ENCODE measurements at regions of chr2 and their contacts with region 1.

Region 1: DNA sequence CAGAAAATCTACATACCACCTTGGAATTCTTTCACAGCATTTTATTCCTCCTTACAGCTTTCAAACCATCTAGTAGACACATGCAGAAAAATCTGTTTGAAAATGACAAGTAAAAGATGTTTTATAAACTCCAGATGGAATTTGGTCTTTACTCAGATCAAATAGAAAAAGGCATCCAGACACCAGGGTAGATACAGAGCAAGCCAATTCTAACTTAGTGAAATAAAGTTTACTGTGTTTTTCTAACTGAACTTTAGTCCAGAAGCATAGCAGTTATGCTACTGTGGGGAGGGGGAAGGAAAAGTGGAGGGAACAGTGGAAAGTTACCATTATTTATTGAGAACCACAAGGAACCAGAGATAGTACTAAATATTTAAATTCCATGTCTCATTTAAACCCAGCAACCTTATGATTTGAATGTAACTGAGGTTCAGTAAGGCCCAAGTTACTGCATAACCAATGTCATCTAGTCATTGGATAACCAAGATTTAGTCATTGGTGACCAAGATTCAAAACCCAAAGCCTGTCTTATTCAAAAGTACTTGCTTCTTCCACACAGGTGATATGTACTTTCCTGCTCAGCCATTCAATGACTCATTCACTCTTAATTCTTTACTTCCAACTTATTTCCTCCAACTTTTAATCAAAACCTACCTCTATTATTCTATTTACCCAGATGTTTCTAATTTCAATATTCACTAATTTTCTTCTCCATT is 57.7 kb downstream of the RAD51AP2 start:
- DNase-seq: no peak
- H3K4me3 ChIP-seq: no peak overlapping the region
- H3K27ac ChIP-seq: no peak overlapping the region
- H3K4me1 ChIP-seq: no peaks in the 10 kb centered on the region
- H3K27me3 ChIP-seq: no peaks in the 10 kb centered on the region
- CTCF ChIP-seq: no peak
- EP300 ChIP-seq: no peak
- POLR2A ChIP-seq: no peak

Region 2: DNA sequence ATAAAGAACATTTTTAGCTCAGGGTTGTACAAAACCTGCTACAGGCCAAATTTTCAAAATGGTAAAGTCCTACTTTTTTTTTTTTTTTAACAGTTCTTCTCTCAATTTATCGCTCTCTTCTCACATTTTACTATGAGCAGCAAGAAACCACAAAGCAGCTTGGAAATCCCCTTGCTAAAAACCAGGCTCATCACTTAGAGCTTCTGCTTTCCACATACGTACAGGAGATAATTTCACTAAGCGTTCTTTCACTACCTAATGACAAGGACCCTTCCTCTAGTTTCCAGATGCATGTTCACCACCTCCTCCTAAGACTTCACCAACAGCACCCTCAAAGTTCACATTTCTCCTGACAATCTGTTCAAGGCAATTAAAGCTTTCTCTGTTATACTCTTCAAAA is 499.9 kb before region 1 on chr2:
- intact Hi-C with region 1: no loop called
- DNase-seq: no peak
- H3K4me3 ChIP-seq: no peak overlapping the region
- H3K27ac ChIP-seq: no peak overlapping the region
- H3K4me1 ChIP-seq: no peaks in the 10 kb centered on the region
- H3K27me3 ChIP-seq: no peaks in the 10 kb centered on the region
- CTCF ChIP-seq: no peak
- EP300 ChIP-seq: no peak
- POLR2A ChIP-seq: no peak

Region 3: GRCh38 chr2:17429130-17429529 is 31.4 kb before region 1 on chr2:
- intact Hi-C with region 1: loop called in 1 of 4 experiments (anchors 2 kb)
- DNase-seq: no peak
- H3K4me3 ChIP-seq: no peak overlapping the region
- H3K27ac ChIP-seq: no peak overlapping the region
- H3K4me1 ChIP-seq: no peaks in the 10 kb centered on the region
- H3K27me3 ChIP-seq: no peaks in the 10 kb centered on the region
- CTCF ChIP-seq: no peak
- EP300 ChIP-seq: no peak
- POLR2A ChIP-seq: no peak

Region 4: GRCh38 chr2:17594533-17595401 is 134.2 kb after region 1 on chr2:
- intact Hi-C with region 1: no loop called
- DNase-seq: peak in 3 of 5 donors; percentile 25 to 49 (median 48)
- H3K4me3 ChIP-seq: no peak overlapping the region
- H3K27ac ChIP-seq: no peak overlapping the region
- H3K4me1 ChIP-seq: peaks cover 1% of the 10 kb centered on the region
- H3K27me3 ChIP-seq: no peaks in the 10 kb centered on the region
- CTCF ChIP-seq: no peak
- EP300 ChIP-seq: no peak
- POLR2A ChIP-seq: no peak

Measured in ovary (tissue), 10 donors.